ENCODE measurements at regions of chr6 and their contacts with region 1.

Region 1: DNA sequence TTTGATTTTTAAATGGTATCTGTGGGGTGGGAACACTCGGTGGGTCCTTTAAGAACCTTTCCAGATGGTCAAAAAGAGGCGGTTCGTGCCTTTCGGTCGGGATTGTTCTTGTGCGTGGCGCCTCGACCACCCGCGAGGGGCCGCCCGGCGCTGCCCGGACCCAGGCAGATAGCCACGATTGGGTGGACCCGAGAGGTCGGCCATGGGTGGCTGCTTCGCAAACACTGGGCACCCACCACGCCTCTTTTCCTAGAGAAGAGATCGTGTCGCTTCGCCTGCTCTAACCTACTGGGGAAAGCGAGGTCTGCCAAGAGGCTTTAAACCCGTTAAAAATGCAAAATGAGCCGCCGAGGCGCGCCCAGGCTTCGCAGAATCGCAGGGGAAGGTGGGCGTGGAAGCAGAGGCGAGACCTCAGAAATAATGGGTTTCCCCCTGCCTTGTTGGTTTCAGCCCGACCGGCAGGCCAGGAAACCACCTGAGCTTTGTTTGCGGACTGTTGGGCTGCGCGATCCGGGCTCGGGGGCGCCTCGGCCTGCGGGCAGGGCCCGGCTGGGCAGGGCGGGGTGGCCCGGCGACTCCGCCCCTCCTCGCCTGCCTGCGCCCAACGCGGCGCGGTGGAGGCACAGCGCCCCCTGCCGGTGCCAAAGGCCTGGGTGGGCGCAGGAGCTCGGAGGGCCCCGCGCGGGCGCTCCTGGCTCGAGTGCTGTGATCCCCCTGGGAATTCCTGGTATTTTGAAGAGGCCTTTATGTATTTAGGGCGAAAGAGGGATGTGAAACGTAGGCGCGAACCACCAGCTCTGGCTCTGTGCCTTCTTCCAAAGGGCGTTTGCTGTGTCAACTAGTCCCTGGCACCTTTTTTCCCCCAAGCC is 1.6 kb downstream of the MARCKS start:
- DNase-seq: peak; percentile 95
- H3K4me3 ChIP-seq: peak overlapping the region; percentile 98 to 99 (median 99)
- H3K27ac ChIP-seq: peak overlapping the region; percentile 99
- H3K4me1 ChIP-seq: peaks cover 16% of the 10 kb centered on the region
- H3K27me3 ChIP-seq: no peaks in the 10 kb centered on the region
- CTCF ChIP-seq: peak; percentile 43 to 84

Region 2: DNA sequence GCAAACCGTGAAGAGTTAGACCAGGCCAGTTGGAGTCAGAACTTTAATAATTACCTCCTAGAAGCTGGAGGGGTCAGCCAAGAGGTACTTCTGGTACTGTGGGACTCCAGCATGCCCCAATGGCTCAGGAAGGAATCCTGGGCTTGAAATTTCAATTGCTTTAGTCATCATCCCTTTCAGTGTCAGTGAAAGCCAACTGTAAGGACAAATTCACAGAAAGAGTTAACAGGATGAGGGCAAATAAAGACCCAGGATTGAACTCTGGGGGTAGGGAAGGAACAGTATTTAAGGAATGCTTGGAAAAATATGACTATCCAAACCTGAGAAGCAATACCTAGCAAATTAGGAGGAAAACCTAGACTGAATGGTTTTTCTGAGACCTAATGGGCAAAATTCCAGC is 736.7 kb before region 1 on chr6:
- CTCF ChIA-PET with region 1: no interaction called
- dilution Hi-C with region 1: no loop called
- in situ Hi-C with region 1: loop called in 1 of 2 experiments (anchors 25 kb)
- intact Hi-C with region 1: loop called (anchors 1 kb)
- DNase-seq: peak; percentile 77
- H3K4me3 ChIP-seq: no peak overlapping the region
- H3K27ac ChIP-seq: no peak overlapping the region
- H3K4me1 ChIP-seq: peaks cover 24% of the 10 kb centered on the region
- H3K27me3 ChIP-seq: no peaks in the 10 kb centered on the region
- CTCF ChIP-seq: peak; percentile 43 to 54

Region 3: GRCh38 chr6:113359155-113360140 is 499.3 kb before region 1 on chr6:
- CTCF ChIA-PET with region 1: no interaction called
- dilution Hi-C with region 1: no loop called
- in situ Hi-C with region 1: no loop called
- intact Hi-C with region 1: loop called (anchors 2 kb)
- DNase-seq: peak; percentile 92
- H3K4me3 ChIP-seq: no peak overlapping the region
- H3K27ac ChIP-seq: peak overlapping the region; percentile 94
- H3K4me1 ChIP-seq: peaks cover 51% of the 10 kb centered on the region
- H3K27me3 ChIP-seq: no peaks in the 10 kb centered on the region
- CTCF ChIP-seq: no peak

Region 4: GRCh38 chr6:113632220-113632864 is 226.4 kb before region 1 on chr6:
- CTCF ChIA-PET with region 1: interaction called, 3 read pairs
- dilution Hi-C with region 1: no loop called
- in situ Hi-C with region 1: loop called in 1 of 2 experiments (anchors 5 kb)
- intact Hi-C with region 1: loop called (anchors 1 kb)
- DNase-seq: peak; percentile 99
- H3K4me3 ChIP-seq: peak overlapping the region in 2 of 3 experiments; percentile 24
- H3K27ac ChIP-seq: peak overlapping the region; percentile 96
- H3K4me1 ChIP-seq: peaks cover 41% of the 10 kb centered on the region
- H3K27me3 ChIP-seq: no peaks in the 10 kb centered on the region
- CTCF ChIP-seq: no peak

Region 5: GRCh38 chr6:113654396-113654795 is 204.3 kb before region 1 on chr6:
- CTCF ChIA-PET with region 1: no interaction called
- dilution Hi-C with region 1: no loop called
- in situ Hi-C with region 1: no loop called
- intact Hi-C with region 1: no loop called
- DNase-seq: peak; percentile 99
- H3K4me3 ChIP-seq: peak overlapping the region in 1 of 3 experiments; percentile 22
- H3K27ac ChIP-seq: peak overlapping the region; percentile 47
- H3K4me1 ChIP-seq: peaks cover 18% of the 10 kb centered on the region
- H3K27me3 ChIP-seq: no peaks in the 10 kb centered on the region
- CTCF ChIP-seq: no peak

Region 6: GRCh38 chr6:113690281-113691259 is 168.1 kb before region 1 on chr6:
- CTCF ChIA-PET with region 1: no interaction called
- dilution Hi-C with region 1: no loop called
- in situ Hi-C with region 1: loop called (anchors 5 to 10 kb)
- intact Hi-C with region 1: loop called (anchors 1 kb)
- DNase-seq: peak; percentile 94
- H3K4me3 ChIP-seq: no peak overlapping the region
- H3K27ac ChIP-seq: peak overlapping the region; percentile 49
- H3K4me1 ChIP-seq: peaks cover 17% of the 10 kb centered on the region
- H3K27me3 ChIP-seq: no peaks in the 10 kb centered on the region
- CTCF ChIP-seq: no peak

Region 7: GRCh38 chr6:113879186-113880096 is 20.7 kb after region 1 on chr6:
- CTCF ChIA-PET with region 1: interaction called, 12 read pairs
- dilution Hi-C with region 1: no loop called
- in situ Hi-C with region 1: no loop called
- intact Hi-C with region 1: loop called (anchors 1 kb)
- DNase-seq: peak; percentile 64
- H3K4me3 ChIP-seq: no peak overlapping the region
- H3K27ac ChIP-seq: no peak overlapping the region
- H3K4me1 ChIP-seq: peaks cover 6% of the 10 kb centered on the region
- H3K27me3 ChIP-seq: no peaks in the 10 kb centered on the region
- CTCF ChIP-seq: peak; percentile 71 to 87

Measured in mammary epithelial cell (primary cell).